ENCODE measurements at regions of chr11 and their contacts with region 1.

Region 1: DNA sequence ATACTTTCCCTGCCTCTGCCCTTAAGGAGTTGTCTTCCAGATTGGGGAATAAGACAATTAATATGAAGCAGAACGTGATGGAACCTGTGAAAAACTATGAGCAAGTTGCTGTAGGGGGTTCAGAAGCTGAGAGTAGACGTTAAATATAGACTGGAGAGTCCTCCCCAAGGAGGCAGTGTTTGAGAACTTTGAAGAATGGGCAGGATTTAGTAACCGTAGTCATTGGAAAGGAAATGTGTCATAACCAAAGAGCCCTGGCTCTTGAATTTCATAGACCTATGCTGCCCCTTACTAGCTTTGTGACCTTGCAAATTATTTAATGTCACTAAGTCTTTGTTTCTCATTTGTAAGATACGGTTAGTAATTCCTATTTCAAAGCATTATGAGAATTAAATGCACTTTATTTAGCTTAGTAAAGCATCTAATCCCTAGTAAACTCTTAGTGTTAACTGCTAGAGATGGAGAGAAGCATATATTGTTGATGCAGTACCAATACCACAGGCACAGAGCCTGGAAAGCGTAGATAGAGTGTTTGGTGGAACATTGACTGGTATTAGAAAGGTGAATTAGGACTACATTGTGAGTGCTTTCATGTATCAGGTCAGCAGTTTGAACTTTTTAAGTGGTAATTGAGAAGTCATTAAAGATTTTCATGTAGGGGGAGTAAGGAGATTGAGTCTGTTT is 54.1 kb downstream of the MCAM start:
- DNase-seq: peak in 1 of 9 donors; percentile 20
- ATAC-seq: peak; percentile 45
- H3K4me3 ChIP-seq: peak overlapping the region; percentile 22
- H3K4me3 Mint-ChIP-seq: no peak overlapping the region
- H3K27ac ChIP-seq: peak overlapping the region; percentile 56
- H3K27ac Mint-ChIP-seq: no peak overlapping the region
- H3K4me1 ChIP-seq: peaks cover 52 to 87% of the 10 kb centered on the region in 2 donors
- H3K4me1 Mint-ChIP-seq: peaks cover 21 to 51% (median 40%) of the 10 kb centered on the region in 7 donors
- H3K27me3 ChIP-seq: no peaks in the 10 kb centered on the region
- H3K27me3 Mint-ChIP-seq: no peaks in the 10 kb centered on the region

Region 2: GRCh38 chr11:118746988-118747585 is 515.7 kb before region 1 on chr11:
- CTCF ChIA-PET with region 1: no interaction called
- POLR2A ChIA-PET with region 1: no interaction called
- intact Hi-C with region 1: no loop called
- DNase-seq: no peak
- ATAC-seq: no peak
- H3K4me3 ChIP-seq: no peak overlapping the region
- H3K4me3 Mint-ChIP-seq: no peak overlapping the region
- H3K27ac ChIP-seq: no peak overlapping the region
- H3K27ac Mint-ChIP-seq: peak overlapping the region in 7 of 9 donors; percentile 29 to 79 (median 52)
- H3K4me1 ChIP-seq: no peaks in the 10 kb centered on the region
- H3K4me1 Mint-ChIP-seq: peaks cover 3 to 26% (median 7%) of the 10 kb centered on the region in 7 donors
- H3K27me3 ChIP-seq: no peaks in the 10 kb centered on the region
- H3K27me3 Mint-ChIP-seq: no peaks in the 10 kb centered on the region

Region 3: DNA sequence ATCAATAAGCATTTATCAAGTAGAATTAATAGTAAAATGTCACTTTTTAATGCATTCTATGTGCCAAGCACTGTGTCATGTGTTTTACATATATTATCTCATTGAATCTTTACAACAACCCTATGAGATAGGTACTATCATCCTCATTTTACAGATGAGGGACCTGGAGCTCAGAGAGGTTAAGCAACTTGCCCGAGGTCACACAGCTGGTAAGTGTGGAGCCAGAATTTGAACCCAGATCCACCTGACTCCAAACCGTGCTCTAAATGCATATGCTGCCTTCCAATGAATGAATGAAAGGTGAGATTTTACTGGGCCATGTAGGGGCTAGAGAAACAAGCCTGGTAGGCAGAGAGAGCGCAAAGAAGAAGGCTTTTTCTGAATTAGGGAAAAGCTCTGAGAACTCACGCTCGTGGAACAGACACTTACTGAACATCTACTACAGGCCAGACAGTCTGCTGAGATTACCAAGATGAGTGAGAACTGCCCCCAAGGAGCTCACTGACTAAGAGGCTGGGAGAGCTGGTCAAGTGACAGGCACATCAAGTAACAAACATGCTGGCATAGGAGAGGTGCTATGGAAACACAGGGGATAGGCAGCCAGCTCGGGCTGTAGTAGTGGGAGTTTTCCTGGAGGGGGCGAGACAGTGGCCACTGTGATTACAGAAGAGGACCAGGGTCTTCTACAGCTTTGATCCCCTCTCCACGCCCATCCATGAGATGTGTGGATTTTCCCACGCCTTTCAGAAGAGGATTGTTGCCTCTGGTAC is 109.6 kb before region 1 on chr11:
- CTCF ChIA-PET with region 1: no interaction called
- POLR2A ChIA-PET with region 1: no interaction called
- intact Hi-C with region 1: no loop called
- DNase-seq: no peak
- ATAC-seq: no peak
- H3K4me3 ChIP-seq: no peak overlapping the region
- H3K4me3 Mint-ChIP-seq: no peak overlapping the region
- H3K27ac ChIP-seq: no peak overlapping the region
- H3K27ac Mint-ChIP-seq: no peak overlapping the region
- H3K4me1 ChIP-seq: peaks cover 0 to 8% of the 10 kb centered on the region in 2 donors
- H3K4me1 Mint-ChIP-seq: peaks cover 4 to 15% (median 11%) of the 10 kb centered on the region in 7 donors
- H3K27me3 ChIP-seq: no peaks in the 10 kb centered on the region
- H3K27me3 Mint-ChIP-seq: peaks cover under 1 to 50% (median 5%) of the 10 kb centered on the region in 5 donors

Region 4: GRCh38 chr11:119229288-119229672 is 33.5 kb before region 1 on chr11:
- CTCF ChIA-PET with region 1: interaction called, 6 read pairs
- POLR2A ChIA-PET with region 1: interaction called, 6 read pairs
- intact Hi-C with region 1: loop called in 1 of 2 experiments (anchors 5 kb)
- DNase-seq: no peak
- ATAC-seq: no peak
- H3K4me3 ChIP-seq: no peak overlapping the region
- H3K4me3 Mint-ChIP-seq: peak overlapping the region; percentile 56 to 89 (median 70)
- H3K27ac ChIP-seq: no peak overlapping the region
- H3K27ac Mint-ChIP-seq: peak overlapping the region; percentile 35 to 89 (median 74)
- H3K4me1 ChIP-seq: peaks cover 14 to 16% of the 10 kb centered on the region in 2 donors
- H3K4me1 Mint-ChIP-seq: peaks cover 36 to 81% (median 61%) of the 10 kb centered on the region in 7 donors
- H3K27me3 ChIP-seq: no peaks in the 10 kb centered on the region
- H3K27me3 Mint-ChIP-seq: no peaks in the 10 kb centered on the region

Region 5: DNA sequence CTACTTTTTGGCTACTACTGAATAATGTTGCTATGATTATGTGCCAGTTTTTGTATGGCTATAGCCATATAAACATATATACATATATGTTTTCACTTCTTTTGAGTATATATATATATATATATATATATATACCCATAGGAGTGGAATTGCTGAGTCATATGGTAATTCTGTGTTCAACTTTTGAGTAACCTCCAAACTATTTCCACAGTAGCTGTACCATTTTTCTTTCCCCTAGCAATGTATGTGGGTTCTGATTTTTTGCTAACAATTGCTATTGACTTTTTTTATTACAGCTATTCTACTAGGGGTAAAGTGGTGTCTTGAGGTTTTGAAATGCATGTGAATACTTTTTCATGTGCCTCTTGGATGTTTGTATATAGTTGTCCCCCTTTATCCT is 26.3 kb before region 1 on chr11:
- CTCF ChIA-PET with region 1: interaction called, 3 read pairs
- POLR2A ChIA-PET with region 1: interaction called, 49 read pairs
- intact Hi-C with region 1: loop called in 1 of 2 experiments (anchors 1 kb)
- DNase-seq: no peak
- ATAC-seq: no peak
- H3K4me3 ChIP-seq: no peak overlapping the region
- H3K4me3 Mint-ChIP-seq: no peak overlapping the region
- H3K27ac ChIP-seq: no peak overlapping the region
- H3K27ac Mint-ChIP-seq: peak overlapping the region in 5 of 9 donors; percentile 15 to 70 (median 26)
- H3K4me1 ChIP-seq: peaks cover 4 to 24% of the 10 kb centered on the region in 2 donors
- H3K4me1 Mint-ChIP-seq: peaks cover 29 to 74% (median 60%) of the 10 kb centered on the region in 7 donors
- H3K27me3 ChIP-seq: no peaks in the 10 kb centered on the region
- H3K27me3 Mint-ChIP-seq: no peaks in the 10 kb centered on the region

Region 6: GRCh38 chr11:119273721-119274120 is 10.9 kb after region 1 on chr11:
- CTCF ChIA-PET with region 1: interaction called, 5 read pairs
- POLR2A ChIA-PET with region 1: interaction called, 16 read pairs
- intact Hi-C with region 1: loop called in 1 of 2 experiments (anchors 1 kb)
- DNase-seq: no peak
- ATAC-seq: no peak
- H3K4me3 ChIP-seq: no peak overlapping the region
- H3K4me3 Mint-ChIP-seq: no peak overlapping the region
- H3K27ac ChIP-seq: no peak overlapping the region
- H3K27ac Mint-ChIP-seq: peak overlapping the region in 5 of 9 donors; percentile 14 to 89 (median 41)
- H3K4me1 ChIP-seq: peaks cover 0 to 9% of the 10 kb centered on the region in 2 donors
- H3K4me1 Mint-ChIP-seq: peaks cover 3 to 55% (median 35%) of the 10 kb centered on the region in 7 donors
- H3K27me3 ChIP-seq: no peaks in the 10 kb centered on the region
- H3K27me3 Mint-ChIP-seq: no peaks in the 10 kb centered on the region

Region 7: DNA sequence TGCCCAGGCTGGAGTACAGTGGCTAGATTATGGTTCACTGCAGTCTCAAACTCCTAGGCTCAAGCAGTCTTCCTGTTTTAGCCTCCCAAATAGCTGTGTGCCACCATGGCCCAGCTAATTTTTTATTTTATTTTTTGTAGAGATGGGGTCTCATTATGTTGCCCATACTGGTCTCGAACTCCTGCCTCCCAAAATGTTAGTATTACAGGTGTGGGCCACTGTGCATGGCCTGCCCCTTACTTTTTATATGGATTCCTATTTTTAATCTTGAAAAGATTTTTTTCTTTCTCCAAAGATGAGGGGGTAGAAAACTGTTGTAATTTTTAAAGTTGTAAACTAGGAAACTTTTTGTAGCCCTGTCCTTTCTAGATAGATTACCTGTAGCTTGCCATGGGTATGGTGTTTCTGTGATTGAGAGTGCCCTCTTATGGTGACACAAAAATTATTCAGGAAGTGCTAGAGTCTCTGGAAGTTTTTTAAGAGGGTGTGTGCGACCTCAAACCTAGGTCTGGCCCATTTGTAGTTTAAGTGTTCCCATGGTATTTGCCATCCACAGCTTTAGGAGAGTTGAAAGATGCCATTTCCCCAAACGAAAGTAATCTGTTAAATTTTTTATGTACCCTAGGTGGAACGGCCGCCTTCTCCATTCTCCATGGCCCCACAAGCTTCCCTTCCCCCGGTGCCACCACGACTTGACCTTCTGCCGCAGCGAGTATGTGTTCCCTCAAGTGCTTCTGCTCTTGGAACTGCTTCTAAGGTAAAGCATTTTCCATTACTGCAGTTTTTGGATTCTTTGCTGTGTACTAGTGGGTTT is 21.7 kb after region 1 on chr11:
- CTCF ChIA-PET with region 1: interaction called, 18 read pairs
- POLR2A ChIA-PET with region 1: interaction called, 7 read pairs
- intact Hi-C with region 1: loop called (anchors 1 kb)
- DNase-seq: peak in 7 of 9 donors; percentile 56 to 76 (median 68)
- ATAC-seq: peak; percentile 94
- H3K4me3 ChIP-seq: no peak overlapping the region
- H3K4me3 Mint-ChIP-seq: peak overlapping the region in 2 of 10 donors; percentile 23 to 51
- H3K27ac ChIP-seq: no peak overlapping the region
- H3K27ac Mint-ChIP-seq: peak overlapping the region; percentile 24 to 91 (median 55)
- H3K4me1 ChIP-seq: peaks cover 0 to 6% of the 10 kb centered on the region in 2 donors
- H3K4me1 Mint-ChIP-seq: peaks cover 17 to 56% (median 41%) of the 10 kb centered on the region in 7 donors
- H3K27me3 ChIP-seq: no peaks in the 10 kb centered on the region
- H3K27me3 Mint-ChIP-seq: no peaks in the 10 kb centered on the region

Measured in naive thymus-derived CD4-positive, alpha-beta T cell (primary cell).